PC-3 (cell line): ENCODE measurements at regions of chr2 and their contacts with region 1.

Region 1: GRCh38 chr2:238561227-238561626 is 134.5 kb downstream of the ASB1 start:
- DNase-seq: peak; percentile 80
- ATAC-seq: peak; percentile 89
- H3K4me3 ChIP-seq: no peak overlapping the region
- H3K27ac ChIP-seq: peak overlapping the region; percentile 62
- H3K4me1 ChIP-seq: peaks cover 18% of the 10 kb centered on the region
- H3K27me3 ChIP-seq: no peaks in the 10 kb centered on the region
- CTCF ChIP-seq: no peak

Region 2: DNA sequence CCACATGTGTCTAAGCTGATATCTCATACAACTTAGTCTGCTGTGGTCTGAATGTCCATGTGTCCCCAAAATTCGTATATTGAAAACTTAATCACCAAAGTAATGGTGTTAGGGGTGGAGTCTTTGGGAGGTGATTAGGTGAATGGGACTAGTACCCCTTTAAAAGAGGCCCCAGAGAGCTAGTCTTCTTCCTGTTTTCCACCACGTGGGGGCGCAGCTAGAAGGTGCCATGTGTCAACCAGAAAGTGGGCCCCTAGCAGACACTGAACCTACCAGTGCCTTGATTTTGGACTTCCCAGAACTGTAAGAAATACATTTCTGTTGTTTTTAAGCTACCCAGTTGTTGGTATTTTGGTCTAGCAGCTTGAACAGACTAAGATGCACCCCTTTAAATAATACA is 47.9 kb before region 1 on chr2:
- CTCF ChIA-PET with region 1: no interaction called
- POLR2A ChIA-PET with region 1: no interaction called
- intact Hi-C with region 1: no loop called
- DNase-seq: peak; percentile 68
- ATAC-seq: peak; percentile 87; the same call in 1 of the 2 replicates
- H3K4me3 ChIP-seq: no peak overlapping the region
- H3K27ac ChIP-seq: no peak overlapping the region
- H3K4me1 ChIP-seq: peaks cover 5% of the 10 kb centered on the region; the same call in 1 of the 2 replicates
- H3K27me3 ChIP-seq: no peaks in the 10 kb centered on the region
- CTCF ChIP-seq: peak; percentile 84

Region 3: DNA sequence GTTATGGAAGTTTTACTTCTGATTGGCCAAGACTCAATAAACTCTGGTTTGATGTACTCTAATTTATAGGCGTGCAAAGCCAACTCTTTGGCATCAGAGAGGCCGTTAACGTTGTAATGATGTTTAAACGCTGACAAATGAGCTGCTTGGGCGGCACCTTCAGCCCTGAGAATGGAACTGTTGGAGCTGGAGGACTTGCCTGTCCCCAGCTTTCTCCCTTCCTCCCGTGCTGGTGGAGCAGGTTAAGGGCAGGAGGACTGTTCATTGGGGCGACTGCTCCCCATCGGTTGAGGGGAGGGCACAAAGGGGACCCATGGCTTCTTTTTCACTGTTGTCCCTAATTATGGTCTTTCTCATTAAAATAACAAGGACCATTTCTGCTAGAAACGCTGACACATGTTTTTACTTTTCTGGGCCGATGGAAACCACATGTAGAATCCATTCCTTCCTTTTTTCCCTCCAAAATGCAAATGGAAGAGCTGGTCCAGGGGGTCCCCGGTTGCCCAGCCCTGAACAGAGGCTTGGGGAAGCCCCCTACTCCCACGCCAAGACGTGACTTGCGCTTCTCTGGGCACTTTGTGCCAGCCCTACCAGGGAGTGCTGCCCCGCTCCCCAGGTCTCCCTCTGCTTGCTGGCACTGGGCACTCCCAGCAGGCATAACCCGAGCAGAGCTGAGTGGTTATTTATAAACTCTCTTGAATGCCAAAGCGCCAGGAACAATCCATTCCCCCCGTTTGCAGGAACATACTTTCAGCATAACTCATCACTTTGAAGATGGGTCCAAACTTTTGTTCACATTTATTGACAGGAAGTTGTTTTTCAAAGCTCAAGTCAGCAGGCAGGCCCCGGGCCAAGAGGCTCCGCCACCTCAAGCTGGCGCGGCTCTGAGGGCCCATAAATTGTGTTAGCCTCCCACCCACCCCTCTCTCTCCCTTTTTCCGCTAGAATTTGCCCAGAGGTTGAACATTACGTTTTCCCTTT is 35.6 kb after region 1 on chr2:
- CTCF ChIA-PET with region 1: interaction called, 4 read pairs
- POLR2A ChIA-PET with region 1: no interaction called
- intact Hi-C with region 1: loop called (anchors 1 kb)
- DNase-seq: peak; percentile 94
- ATAC-seq: peak; percentile 98
- H3K4me3 ChIP-seq: no peak overlapping the region; the same call in 1 of the 2 replicates
- H3K27ac ChIP-seq: peak overlapping the region; percentile 55
- H3K4me1 ChIP-seq: peaks cover 18% of the 10 kb centered on the region
- H3K27me3 ChIP-seq: no peaks in the 10 kb centered on the region
- CTCF ChIP-seq: no peak

Region 4: DNA sequence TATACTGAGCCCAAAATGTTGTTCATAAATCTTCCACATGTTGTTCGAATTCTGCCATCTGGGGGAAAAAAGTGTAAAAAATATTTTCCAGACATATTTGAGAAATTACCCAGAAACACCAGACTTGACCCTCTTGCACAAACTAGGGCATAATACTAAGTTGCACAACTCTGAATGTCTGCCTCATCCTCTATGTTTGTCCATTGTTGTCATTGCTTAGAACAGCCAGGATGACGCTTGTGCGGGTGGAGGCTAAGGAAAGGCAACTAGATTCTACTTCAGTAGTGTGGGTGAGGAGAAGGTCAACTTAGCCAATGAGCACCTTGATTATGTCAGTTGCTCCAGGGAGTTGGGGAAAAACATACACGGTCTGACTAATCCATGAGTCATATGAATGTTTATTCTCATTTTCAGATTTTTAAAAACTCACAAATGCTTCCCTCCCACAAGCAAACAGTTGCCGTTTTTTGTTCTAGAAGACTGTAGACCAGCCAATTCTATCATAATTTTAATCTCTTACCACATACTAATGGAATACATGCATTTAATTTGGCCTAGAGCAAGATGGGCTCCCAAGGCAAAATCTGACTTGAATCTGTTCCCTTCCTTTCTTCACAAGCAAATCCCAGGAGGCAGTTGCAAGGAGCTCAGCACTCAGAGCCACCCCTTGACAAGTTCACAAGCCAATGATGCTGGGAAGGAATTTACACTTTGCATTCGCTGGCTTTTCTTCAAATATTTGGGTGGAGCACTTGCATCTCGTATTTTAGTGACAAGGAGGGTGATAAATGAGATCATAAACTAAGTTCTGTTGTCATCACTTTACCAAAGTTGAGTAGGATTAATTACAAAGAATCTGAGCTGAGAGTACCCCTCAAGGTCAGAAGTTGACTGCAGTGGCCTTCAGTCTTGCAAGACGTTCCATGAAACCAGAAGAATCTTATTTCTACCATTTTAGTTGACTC is 123.4 kb after region 1 on chr2:
- CTCF ChIA-PET with region 1: interaction called, 3 read pairs
- POLR2A ChIA-PET with region 1: no interaction called
- intact Hi-C with region 1: loop called (anchors 1 kb)
- DNase-seq: peak; percentile 97
- ATAC-seq: peak; percentile 98
- H3K4me3 ChIP-seq: peak overlapping the region; percentile 12; the same call in 1 of the 2 replicates
- H3K27ac ChIP-seq: peak overlapping the region; percentile 92
- H3K4me1 ChIP-seq: peaks cover 28% of the 10 kb centered on the region
- H3K27me3 ChIP-seq: no peaks in the 10 kb centered on the region
- CTCF ChIP-seq: no peak